Heart right ventricle (tissue), 16 donors: ENCODE measurements at regions of chr4 and their contacts with region 1.

Region 1: GRCh38 chr4:11428899-11429698 is 405 bp upstream of the HS3ST1 start:
- DNase-seq: peak; percentile 78 to 81
- ATAC-seq: peak; percentile 89 to 99 (median 94)
- H3K4me3 ChIP-seq: peak overlapping the region; percentile 37 to 78 (median 65)
- H3K27ac ChIP-seq: peak overlapping the region in 7 of 10 donors; percentile 4 to 74 (median 37)
- H3K4me1 ChIP-seq: peaks cover 0 to 29% (median 22%) of the 10 kb centered on the region in 9 donors
- H3K27me3 ChIP-seq: peaks cover 0 to 45% (median 24%) of the 10 kb centered on the region in 7 donors
- CTCF ChIP-seq: peak in 8 of 9 donors; percentile 54 to 86 (median 74)

Region 2: DNA sequence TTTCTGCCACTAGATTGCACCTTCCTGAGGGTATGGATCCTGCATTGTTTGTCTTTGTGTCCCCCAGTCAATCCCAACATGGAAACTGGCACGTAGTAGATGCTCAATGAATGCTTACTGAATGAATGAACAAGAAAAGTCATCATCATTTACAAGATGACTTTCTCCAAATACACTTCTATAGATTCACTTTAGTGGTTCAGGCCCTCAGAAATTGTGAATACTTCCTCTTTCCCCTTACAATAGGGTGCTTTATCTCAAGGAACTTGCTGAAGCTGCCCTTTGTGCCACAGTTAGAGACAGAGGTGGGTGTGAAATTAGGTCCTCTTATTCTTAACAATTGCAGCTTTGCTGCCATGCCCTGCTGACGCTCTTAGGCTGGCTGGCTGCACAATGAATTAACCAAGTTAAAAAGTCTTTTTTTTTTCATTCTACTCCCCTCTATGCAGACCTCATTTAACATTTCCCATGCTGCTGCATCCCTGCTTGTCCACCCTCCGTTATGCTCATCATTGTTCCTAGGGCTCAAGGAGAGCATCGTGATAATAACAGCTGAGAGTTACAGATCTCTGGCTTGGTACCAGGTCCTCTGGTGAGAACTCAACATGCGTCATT is 863.8 kb before region 1 on chr4:
- intact Hi-C with region 1: loop called in 1 of 10 experiments (anchors 10 kb)
- DNase-seq: no peak
- ATAC-seq: no peak
- H3K4me3 ChIP-seq: no peak overlapping the region
- H3K27ac ChIP-seq: no peak overlapping the region
- H3K4me1 ChIP-seq: no peaks in the 10 kb centered on the region
- H3K27me3 ChIP-seq: peaks cover 0 to 13% (median 2%) of the 10 kb centered on the region in 7 donors
- CTCF ChIP-seq: no peak

Region 3: GRCh38 chr4:10582059-10582686 is 846.9 kb before region 1 on chr4:
- intact Hi-C with region 1: loop called in 5 of 10 experiments (anchors 5 to 10 kb)
- DNase-seq: peak in 1 of 2 donors; percentile 35
- ATAC-seq: peak in 3 of 8 donors; percentile 45 to 76 (median 56)
- H3K4me3 ChIP-seq: no peak overlapping the region
- H3K27ac ChIP-seq: no peak overlapping the region
- H3K4me1 ChIP-seq: peaks cover 0 to 12% (median 0%) of the 10 kb centered on the region in 9 donors
- H3K27me3 ChIP-seq: peaks cover 0 to 10% (median 0%) of the 10 kb centered on the region in 7 donors
- CTCF ChIP-seq: peak; percentile 27 to 84 (median 78)

Region 4: DNA sequence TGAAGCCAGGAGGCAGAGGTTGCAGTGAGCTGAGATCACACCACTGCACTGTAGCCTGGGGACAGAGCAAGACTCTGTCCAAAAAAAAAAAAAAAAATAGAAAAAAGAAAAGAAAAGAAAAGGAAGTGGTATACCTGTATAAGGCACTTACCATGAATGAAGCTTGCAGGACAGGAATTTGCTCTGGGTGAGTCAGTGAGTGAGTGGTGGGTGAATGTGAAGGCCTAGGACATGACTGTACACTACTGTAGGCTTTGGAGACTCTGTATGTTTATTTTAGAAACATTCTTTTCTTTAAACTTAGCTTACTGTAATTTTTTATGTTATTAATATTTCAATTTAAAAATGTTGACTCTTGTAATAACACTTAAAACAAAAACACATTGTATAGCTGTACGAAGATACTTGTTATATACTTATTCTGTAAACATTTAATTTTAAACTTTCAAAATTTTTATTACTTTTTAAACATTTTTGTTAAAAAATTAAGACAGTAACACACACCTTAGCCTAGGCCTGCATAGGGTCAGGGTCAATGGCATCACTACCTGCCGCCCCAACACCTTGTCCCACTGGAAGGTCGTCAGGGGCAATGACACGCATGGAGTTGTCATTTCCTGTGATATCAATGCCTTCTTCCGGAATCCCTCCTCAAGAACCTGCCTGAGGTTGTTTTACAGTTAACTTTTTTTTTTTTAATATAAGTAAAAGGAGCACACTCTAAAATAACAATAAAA is 823.2 kb before region 1 on chr4:
- intact Hi-C with region 1: loop called in 1 of 10 experiments (anchors 10 kb)
- DNase-seq: no peak
- ATAC-seq: no peak
- H3K4me3 ChIP-seq: no peak overlapping the region
- H3K27ac ChIP-seq: no peak overlapping the region
- H3K4me1 ChIP-seq: no peaks in the 10 kb centered on the region
- H3K27me3 ChIP-seq: no peaks in the 10 kb centered on the region
- CTCF ChIP-seq: no peak

Region 5: GRCh38 chr4:11393551-11393950 is 35.5 kb before region 1 on chr4:
- intact Hi-C with region 1: no loop called
- DNase-seq: no peak
- ATAC-seq: no peak
- H3K4me3 ChIP-seq: no peak overlapping the region
- H3K27ac ChIP-seq: no peak overlapping the region
- H3K4me1 ChIP-seq: peaks cover 0 to 19% (median 0%) of the 10 kb centered on the region in 9 donors
- H3K27me3 ChIP-seq: no peaks in the 10 kb centered on the region
- CTCF ChIP-seq: no peak

Region 6: GRCh38 chr4:11505221-11505971 is 76.3 kb after region 1 on chr4:
- intact Hi-C with region 1: no loop called
- DNase-seq: no peak
- ATAC-seq: peak in 7 of 8 donors; percentile 27 to 77 (median 60)
- H3K4me3 ChIP-seq: no peak overlapping the region
- H3K27ac ChIP-seq: peak overlapping the region in 3 of 10 donors; percentile 3 to 25 (median 18)
- H3K4me1 ChIP-seq: peaks cover 0 to 23% (median 0%) of the 10 kb centered on the region in 9 donors
- H3K27me3 ChIP-seq: no peaks in the 10 kb centered on the region
- CTCF ChIP-seq: no peak

Region 7: DNA sequence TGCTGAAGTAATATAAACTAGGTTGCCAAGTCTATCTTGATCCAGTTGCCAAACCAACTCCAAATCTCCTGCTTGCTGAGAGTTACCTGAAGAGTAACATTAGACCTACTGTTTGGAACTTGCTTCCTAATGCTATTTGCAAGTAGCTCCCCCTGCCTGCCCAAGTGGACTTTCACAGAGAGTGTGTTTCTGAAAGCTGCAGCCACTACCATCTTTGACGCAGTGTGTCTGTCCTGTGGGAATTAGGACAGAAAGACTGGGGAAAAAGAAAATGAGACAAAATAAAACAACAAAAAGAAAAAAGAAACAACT is 194.6 kb after region 1 on chr4:
- intact Hi-C with region 1: loop called in 7 of 10 experiments (anchors 5 to 10 kb)
- DNase-seq: peak in 1 of 2 donors; percentile 34
- ATAC-seq: peak in 2 of 8 donors; percentile 40 to 48
- H3K4me3 ChIP-seq: no peak overlapping the region
- H3K27ac ChIP-seq: peak overlapping the region in 3 of 10 donors; percentile 70 to 80 (median 74)
- H3K4me1 ChIP-seq: peaks cover 0 to 38% (median 6%) of the 10 kb centered on the region in 9 donors
- H3K27me3 ChIP-seq: no peaks in the 10 kb centered on the region
- CTCF ChIP-seq: peak in 7 of 9 donors; percentile 46 to 70 (median 53)

Region 8: DNA sequence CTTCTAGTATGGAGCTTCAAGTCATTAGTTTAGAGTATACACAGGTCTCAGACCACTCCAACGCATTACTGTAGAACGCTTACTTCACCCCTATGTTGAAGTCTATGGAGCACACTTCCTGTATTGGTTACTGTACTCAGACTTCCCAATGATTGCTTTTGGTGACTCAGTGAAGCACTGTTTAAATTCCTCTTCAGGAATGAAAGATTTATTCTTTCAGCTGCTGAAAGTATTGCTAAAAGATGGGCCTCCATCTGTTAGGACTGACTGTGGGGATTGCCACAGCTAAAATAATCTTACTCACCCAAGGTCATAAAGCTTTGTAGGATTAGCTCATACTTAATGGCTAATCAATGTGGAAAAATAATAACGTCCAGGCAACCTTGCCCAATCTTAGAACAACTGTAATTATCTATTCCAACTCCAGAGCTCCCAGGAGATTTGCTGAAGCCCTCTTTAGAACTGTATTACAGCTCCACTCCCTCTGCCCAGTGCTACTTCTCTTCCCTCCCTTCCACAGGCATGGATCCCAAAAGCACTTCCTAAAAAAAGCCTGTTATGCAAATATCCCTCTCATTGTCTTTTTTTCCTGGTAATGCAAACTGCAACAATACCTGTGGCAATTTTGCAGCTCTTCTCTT is 281.5 kb after region 1 on chr4:
- intact Hi-C with region 1: loop called in 2 of 10 experiments (anchors 10 kb)
- DNase-seq: no peak
- ATAC-seq: no peak
- H3K4me3 ChIP-seq: no peak overlapping the region
- H3K27ac ChIP-seq: no peak overlapping the region
- H3K4me1 ChIP-seq: no peaks in the 10 kb centered on the region
- H3K27me3 ChIP-seq: no peaks in the 10 kb centered on the region
- CTCF ChIP-seq: no peak

Region 9: GRCh38 chr4:11720292-11720691 is 291.2 kb after region 1 on chr4:
- intact Hi-C with region 1: loop called in 7 of 10 experiments (anchors 5 to 10 kb)
- DNase-seq: peak in 1 of 2 donors; percentile 7
- ATAC-seq: peak in 3 of 8 donors; percentile 48 to 66 (median 56)
- H3K4me3 ChIP-seq: no peak overlapping the region
- H3K27ac ChIP-seq: no peak overlapping the region
- H3K4me1 ChIP-seq: peaks cover 0 to 6% (median 0%) of the 10 kb centered on the region in 9 donors
- H3K27me3 ChIP-seq: no peaks in the 10 kb centered on the region
- CTCF ChIP-seq: peak; percentile 41 to 81 (median 73)

Region 10: GRCh38 chr4:11889099-11889498 is 460.0 kb after region 1 on chr4:
- intact Hi-C with region 1: no loop called
- DNase-seq: no peak
- ATAC-seq: no peak
- H3K4me3 ChIP-seq: no peak overlapping the region
- H3K27ac ChIP-seq: no peak overlapping the region
- H3K4me1 ChIP-seq: no peaks in the 10 kb centered on the region
- H3K27me3 ChIP-seq: no peaks in the 10 kb centered on the region
- CTCF ChIP-seq: no peak